H1 (cell line): ENCODE measurements at regions of chr1 and their contacts with region 1.

Region 1: GRCh38 chr1:115764541-115764940 is 4.0 kb downstream of the CASQ2 start:
- DNase-seq: no peak
- H3K4me3 ChIP-seq: no peak overlapping the region
- H3K27ac ChIP-seq: no peak overlapping the region
- H3K4me1 ChIP-seq: no peaks in the 10 kb centered on the region
- H3K27me3 ChIP-seq: no peaks in the 10 kb centered on the region
- CTCF ChIP-seq: peak in 2 of 3 experiments; percentile 68 to 75; a peak in 3 of 4 replicates
- EP300 ChIP-seq: no peak
- POLR2A ChIP-seq: no peak
- RAD21 ChIP-seq: peak; percentile 83 to 88

Region 2: DNA sequence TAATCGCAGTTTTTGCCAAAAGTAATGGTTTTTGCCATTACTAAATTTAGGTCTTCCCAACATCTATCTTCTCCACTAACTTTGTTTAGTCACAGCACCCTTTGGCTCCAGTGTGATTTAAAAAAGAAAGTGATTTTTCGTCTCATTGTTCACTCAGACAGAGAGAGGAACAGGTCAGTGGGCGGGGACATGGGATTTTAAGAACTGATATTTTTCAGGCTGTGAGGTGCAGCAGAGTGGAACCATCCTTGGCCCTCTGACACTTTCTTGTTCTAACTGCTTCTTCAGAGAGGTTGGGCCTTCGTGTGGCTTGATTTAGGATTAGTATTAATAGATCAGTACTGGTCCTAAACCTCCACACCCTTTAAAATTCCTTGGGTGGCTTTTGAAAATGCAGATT is 34.8 kb before region 1 on chr1:
- CTCF ChIA-PET with region 1: interaction called, 38 read pairs
- POLR2A ChIA-PET with region 1: no interaction called
- DNase-seq: no peak
- H3K4me3 ChIP-seq: no peak overlapping the region
- H3K27ac ChIP-seq: no peak overlapping the region
- H3K4me1 ChIP-seq: no peaks in the 10 kb centered on the region
- H3K27me3 ChIP-seq: no peaks in the 10 kb centered on the region
- CTCF ChIP-seq: no peak
- EP300 ChIP-seq: no peak
- POLR2A ChIP-seq: no peak
- RAD21 ChIP-seq: no peak

Region 3: DNA sequence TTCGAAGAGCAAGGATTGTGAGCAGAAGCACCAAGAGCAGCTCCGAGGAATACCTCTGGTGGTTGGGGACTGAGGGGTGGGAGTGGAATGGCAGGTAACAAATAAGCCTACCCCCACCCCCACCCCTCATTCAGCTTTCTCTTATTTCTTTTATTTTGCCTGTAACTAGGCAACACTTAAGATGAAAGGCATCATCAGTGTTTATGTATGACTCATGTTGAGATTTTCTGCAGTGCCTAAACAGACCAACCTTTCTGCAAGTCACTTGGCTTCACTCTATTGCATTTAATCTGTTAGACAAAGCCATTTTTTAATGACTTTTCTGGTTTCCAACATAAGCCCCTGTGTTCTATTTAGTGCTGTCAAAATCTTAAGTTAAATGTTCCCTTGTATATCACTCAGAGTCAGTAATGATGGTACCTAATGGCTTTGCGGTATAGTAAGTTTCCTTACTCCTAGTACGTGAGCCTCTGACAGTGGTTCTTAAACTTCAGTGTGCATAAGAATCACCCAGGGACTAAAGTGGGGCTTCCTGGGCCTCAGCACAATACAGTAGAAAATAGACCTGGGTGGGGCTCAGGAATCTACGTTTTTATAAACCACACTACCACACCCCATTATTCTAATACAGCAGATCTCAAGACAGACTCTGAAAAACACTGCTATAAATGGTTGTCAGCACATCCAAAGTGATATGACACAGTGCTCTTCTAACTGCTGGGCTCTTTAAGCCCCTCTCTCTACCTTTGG is 16.0 kb before region 1 on chr1:
- CTCF ChIA-PET with region 1: interaction called, 11 read pairs
- POLR2A ChIA-PET with region 1: no interaction called
- DNase-seq: no peak
- H3K4me3 ChIP-seq: no peak overlapping the region
- H3K27ac ChIP-seq: no peak overlapping the region
- H3K4me1 ChIP-seq: no peaks in the 10 kb centered on the region
- H3K27me3 ChIP-seq: peaks cover 0 to 1% (median 0%) of the 10 kb centered on the region in 4 experiments; a peak in 1 of 7 replicates
- CTCF ChIP-seq: no peak
- EP300 ChIP-seq: no peak
- POLR2A ChIP-seq: no peak
- RAD21 ChIP-seq: no peak

Region 4: DNA sequence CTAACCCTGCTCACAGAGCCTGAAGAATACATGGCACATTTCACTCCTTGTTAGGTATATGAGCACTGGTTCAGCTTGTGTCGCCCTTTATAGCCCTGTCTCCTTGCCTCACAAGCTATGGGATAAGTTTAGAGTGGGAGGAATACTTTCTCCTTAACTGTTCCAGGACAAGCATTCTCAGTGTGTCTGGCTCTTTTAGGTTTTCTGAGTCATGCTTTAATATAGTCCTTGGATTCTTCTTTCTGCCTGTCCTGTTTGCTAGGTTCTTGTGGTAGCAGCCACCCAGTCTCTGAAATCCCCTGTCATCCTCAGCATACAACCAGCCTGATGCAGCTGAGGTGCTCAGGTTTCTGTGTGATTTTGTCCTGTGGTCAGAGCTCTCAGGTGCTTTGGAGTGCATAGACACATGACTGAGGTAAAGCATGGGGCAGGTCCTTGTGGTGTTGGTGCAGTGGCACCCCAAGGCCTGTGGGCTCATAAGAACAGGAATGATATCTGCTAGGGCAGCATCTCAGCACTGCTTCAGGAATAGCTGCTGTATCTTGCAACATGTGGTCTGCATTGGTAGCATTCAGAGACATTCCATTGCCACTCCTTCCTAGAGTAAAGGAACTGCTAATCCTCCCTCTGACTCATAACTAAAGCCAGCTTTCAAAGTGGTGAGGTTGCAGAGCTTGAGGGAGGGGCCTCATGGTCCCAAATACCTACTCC is 18.2 kb after region 1 on chr1:
- CTCF ChIA-PET with region 1: interaction called, 11 read pairs
- POLR2A ChIA-PET with region 1: no interaction called
- DNase-seq: no peak
- H3K4me3 ChIP-seq: no peak overlapping the region
- H3K27ac ChIP-seq: no peak overlapping the region
- H3K4me1 ChIP-seq: no peaks in the 10 kb centered on the region
- H3K27me3 ChIP-seq: no peaks in the 10 kb centered on the region; a peak in 1 of 7 replicates
- CTCF ChIP-seq: no peak
- EP300 ChIP-seq: no peak
- POLR2A ChIP-seq: no peak
- RAD21 ChIP-seq: no peak

Region 5: GRCh38 chr1:115929881-115930280 is 165.3 kb after region 1 on chr1:
- CTCF ChIA-PET with region 1: no interaction called
- POLR2A ChIA-PET with region 1: no interaction called
- DNase-seq: no peak
- H3K4me3 ChIP-seq: no peak overlapping the region
- H3K27ac ChIP-seq: no peak overlapping the region
- H3K4me1 ChIP-seq: peaks cover 0 to 7% (median 2%) of the 10 kb centered on the region in 4 experiments; a peak in 5 of 7 replicates
- H3K27me3 ChIP-seq: no peaks in the 10 kb centered on the region
- CTCF ChIP-seq: no peak
- EP300 ChIP-seq: no peak
- POLR2A ChIP-seq: no peak
- RAD21 ChIP-seq: no peak